ENCODE measurements at regions of chr14 and their contacts with region 1.

Region 1: GRCh38 chr14:34331728-34332623 is 130.1 kb downstream of the SPTSSA start:
- DNase-seq: no peak
- ATAC-seq: peak; percentile 80

Region 2: GRCh38 chr14:34300882-34301734 is 30.9 kb before region 1 on chr14:
- intact Hi-C with region 1: no loop called
- DNase-seq: no peak
- ATAC-seq: peak; percentile 43

Region 3: GRCh38 chr14:34498684-34499412 is 166.9 kb after region 1 on chr14:
- intact Hi-C with region 1: loop called (anchors 2 kb)
- DNase-seq: no peak
- ATAC-seq: no peak